Psoas muscle (tissue), 8 donors: ENCODE measurements at regions of chr3 and their contacts with region 1.

Region 1: DNA sequence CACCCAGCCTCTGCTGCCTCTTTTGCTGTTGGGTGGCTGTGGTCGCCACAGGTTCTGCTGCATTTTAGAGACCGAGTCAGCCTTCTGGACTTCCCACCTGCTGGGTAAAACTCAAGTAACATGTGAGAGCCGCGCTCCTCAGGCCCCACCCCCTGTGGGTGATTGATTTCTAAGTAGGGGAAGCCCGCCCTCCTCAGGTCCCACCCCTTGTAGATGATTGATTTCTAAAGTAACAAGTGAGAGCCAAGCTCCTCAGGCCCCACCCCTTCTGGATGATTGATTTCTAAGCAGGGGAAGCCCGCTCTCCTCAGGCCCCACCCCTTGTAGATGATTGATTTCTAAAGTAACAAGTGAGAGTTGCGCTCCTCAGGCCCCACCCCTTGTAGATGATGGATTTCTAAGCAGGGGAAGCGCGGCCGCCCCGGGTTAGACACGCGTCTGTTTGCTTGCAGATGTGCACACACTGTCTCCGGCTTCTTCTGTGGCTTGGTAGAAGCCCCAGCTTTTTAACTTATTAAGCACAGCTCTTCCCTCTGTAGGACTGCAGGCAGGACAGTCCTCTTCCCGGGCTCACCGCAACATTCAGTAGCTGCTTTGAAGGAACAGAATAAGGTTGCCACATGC is 83.4 kb downstream of the FAM43A start:
- DNase-seq: peak; percentile 88 to 91
- ATAC-seq: peak; percentile 98 to 99 (median 99)
- H3K4me3 ChIP-seq: peak overlapping the region; percentile 57
- H3K27ac ChIP-seq: peak overlapping the region; percentile 61
- H3K4me1 ChIP-seq: peaks cover 17% of the 10 kb centered on the region
- H3K27me3 ChIP-seq: no peaks in the 10 kb centered on the region
- CTCF ChIP-seq: no peak

Region 2: DNA sequence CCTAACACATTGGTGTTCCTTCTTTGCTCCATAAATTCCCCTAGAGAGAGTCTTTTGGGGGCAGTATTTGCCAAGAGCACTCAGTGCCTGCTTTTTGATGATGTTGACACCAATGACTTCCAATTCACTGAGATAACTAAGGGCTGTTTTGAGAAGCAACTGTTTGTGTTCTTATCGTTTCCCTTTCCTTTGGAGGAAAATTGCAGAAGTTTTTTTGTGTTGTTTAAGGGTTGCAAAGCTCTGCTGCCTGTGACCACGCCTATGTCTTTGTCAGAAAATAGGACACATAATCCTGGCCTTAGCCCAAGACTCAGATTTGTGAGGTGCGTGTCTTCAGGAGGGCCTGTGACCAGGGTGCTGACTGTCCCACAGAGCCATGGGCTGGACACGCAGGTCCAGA is 16.2 kb after region 1 on chr3:
- intact Hi-C with region 1: loop called in 1 of 2 experiments (anchors 1 kb)
- DNase-seq: no peak
- ATAC-seq: peak in 1 of 4 donors; percentile 13
- H3K4me3 ChIP-seq: no peak overlapping the region
- H3K27ac ChIP-seq: no peak overlapping the region
- H3K4me1 ChIP-seq: no peaks in the 10 kb centered on the region
- H3K27me3 ChIP-seq: peaks cover 0 to 1% (median 0%) of the 10 kb centered on the region in 3 donors
- CTCF ChIP-seq: no peak

Region 3: GRCh38 chr3:195195321-195196209 is 426.4 kb after region 1 on chr3:
- intact Hi-C with region 1: no loop called
- DNase-seq: peak in 1 of 2 donors; percentile 35
- ATAC-seq: peak in 1 of 4 donors; percentile 16
- H3K4me3 ChIP-seq: no peak overlapping the region
- H3K27ac ChIP-seq: no peak overlapping the region
- H3K4me1 ChIP-seq: no peaks in the 10 kb centered on the region
- H3K27me3 ChIP-seq: no peaks in the 10 kb centered on the region
- CTCF ChIP-seq: no peak

Region 4: DNA sequence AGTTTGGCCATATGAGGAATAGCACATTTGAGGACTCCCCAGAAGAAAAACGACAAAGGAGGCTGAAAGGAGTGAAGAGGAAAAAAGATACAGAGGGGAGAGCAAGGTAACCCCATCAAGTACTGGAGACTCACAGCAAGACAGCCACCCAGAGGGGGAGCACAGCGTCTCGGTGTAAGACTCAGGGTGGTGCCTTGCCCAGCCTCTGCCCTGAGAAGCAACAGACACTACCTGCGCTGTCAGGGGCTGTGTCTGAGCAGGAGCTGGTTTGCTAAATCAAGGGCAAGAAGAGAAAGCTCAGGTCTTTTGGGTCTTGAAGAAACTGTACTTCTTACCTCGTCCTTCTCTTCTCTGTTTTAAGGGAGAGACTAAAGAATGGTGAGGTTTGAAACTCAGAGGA is 1827.2 kb after region 1 on chr3:
- intact Hi-C with region 1: no loop called
- DNase-seq: no peak
- ATAC-seq: no peak
- H3K4me3 ChIP-seq: no peak overlapping the region
- H3K27ac ChIP-seq: no peak overlapping the region
- H3K4me1 ChIP-seq: no peaks in the 10 kb centered on the region
- H3K27me3 ChIP-seq: no peaks in the 10 kb centered on the region
- CTCF ChIP-seq: no peak